ENCODE measurements at regions of chrX and their contacts with region 1.

Region 1: GRCh38 chrX:109632906-109633504 is 8.0 kb upstream of the KCNE5 start:
- DNase-seq: peak in 16 of 42 donors; percentile 8 to 52 (median 22)

Region 2: GRCh38 chrX:109448282-109448938 is 184.6 kb before region 1 on chrX:
- intact Hi-C with region 1: no loop called
- DNase-seq: peak in 27 of 42 donors; percentile 1 to 53 (median 16)

Region 3: DNA sequence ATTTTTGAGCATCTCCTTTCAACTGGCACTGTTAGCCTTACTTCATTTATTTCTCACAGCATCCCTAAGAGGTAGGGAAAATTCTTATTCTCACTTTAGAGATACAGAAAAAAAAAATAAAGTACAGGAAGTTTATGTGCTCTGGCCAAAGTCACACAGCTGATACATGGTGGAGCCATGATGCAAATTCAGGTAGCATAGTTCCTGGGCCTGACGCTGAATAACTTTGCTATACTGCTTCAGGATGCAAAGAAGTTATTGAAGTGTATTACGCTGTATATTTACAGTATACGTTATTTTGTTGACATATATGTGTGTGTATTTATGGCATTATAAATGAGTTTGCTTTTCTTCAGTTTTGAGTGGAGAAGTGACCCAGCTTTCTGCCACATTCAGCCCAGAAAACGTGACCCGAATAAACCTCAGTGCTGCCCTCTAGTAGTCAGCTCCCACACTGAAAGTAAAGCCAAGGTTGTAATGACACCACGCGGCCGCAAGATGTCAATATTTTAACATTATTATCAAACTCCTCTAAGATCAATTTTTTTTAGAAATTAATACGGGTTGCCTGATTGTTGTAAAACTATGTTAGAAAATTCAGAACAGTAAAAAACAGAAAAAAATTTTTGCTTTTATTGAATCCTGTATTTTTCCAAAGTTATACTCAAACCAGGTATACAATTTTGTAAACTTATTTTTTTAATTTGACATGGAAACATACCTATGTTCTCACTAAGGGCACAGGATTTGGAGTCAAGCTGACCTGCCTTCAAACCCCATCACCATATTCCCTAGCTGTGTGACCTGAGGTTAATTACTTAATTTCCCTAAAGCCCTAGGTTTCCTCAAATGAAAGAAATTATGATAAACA is 147.3 kb before region 1 on chrX:
- intact Hi-C with region 1: loop called (anchors 2 kb)
- DNase-seq: peak; percentile 22 to 85 (median 68)